Activated CD4-positive, alpha-beta T cell treated with anti-CD3 and anti-CD28 coated beads, Interleukin-2, amount 10 ng/mL, durations not matched to agents 24 days and 14 days (primary cell): ENCODE measurements at regions of chr21 and their contacts with region 1.

Region 1: GRCh38 chr21:17903029-17903806 is 84.1 kb upstream of the C21orf91 start:
- DNase-seq: no peak
- H3K4me3 Mint-ChIP-seq: no peak overlapping the region
- H3K27ac Mint-ChIP-seq: no peak overlapping the region
- H3K4me1 Mint-ChIP-seq: peaks cover 13% of the 10 kb centered on the region
- H3K27me3 Mint-ChIP-seq: peaks cover 3% of the 10 kb centered on the region

Region 2: DNA sequence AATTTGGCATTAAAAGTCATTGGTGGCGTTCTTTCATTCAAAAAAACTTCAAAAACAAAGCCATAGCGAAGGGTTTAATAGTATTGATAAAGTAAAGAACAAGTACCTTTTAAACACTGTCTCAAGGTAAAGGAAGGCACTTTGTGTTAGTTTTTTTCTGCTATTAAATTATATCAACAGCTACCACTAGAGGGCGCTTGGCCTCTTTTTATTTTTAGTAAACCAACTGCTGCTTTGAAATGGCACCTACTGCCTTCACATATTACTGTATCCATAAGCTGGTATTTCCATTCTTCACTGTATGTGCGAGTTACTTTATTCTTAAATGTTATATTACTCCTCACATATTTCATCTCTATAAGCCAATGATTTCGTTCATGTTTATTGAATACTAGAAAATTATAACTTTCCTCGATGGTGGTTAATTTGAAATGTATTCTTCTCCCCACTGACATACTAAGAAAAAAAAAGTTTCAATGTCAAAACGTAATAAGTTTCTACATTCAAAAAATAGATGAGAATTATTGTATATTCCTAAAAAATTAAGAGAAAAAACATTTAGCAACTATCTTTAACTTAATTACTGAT is 516.1 kb before region 1 on chr21:
- intact Hi-C with region 1: loop called (anchors 10 kb)
- DNase-seq: peak; percentile 85
- H3K4me3 Mint-ChIP-seq: no peak overlapping the region
- H3K27ac Mint-ChIP-seq: no peak overlapping the region
- H3K4me1 Mint-ChIP-seq: no peaks in the 10 kb centered on the region
- H3K27me3 Mint-ChIP-seq: peaks cover 3% of the 10 kb centered on the region

Region 3: DNA sequence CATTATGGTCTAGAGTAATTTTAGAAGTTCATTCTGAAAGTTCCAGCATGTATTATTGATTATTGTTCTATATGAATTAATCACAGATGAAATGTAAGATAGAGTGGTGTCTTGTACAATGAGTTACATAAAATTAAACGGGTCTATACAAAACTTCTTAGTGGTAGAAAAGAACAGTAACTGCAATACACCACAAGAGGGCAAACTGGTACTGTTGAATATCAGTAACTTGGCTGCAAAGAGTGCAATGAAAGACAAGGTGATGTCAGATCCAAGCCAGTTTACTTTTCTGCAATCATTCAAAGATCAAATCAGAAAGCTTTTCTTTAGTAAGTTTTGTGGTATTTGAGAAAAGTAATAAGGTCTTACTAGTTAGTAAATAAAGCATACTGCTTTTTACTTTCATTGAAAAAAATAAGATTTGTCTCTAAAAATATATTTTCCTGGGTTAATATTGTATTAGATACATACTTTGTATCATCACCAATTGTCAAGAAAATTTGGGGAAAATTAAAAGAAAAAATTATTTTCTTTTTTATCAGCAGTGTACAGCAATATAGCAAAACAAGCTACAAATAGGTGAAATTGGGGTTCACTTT is 224.1 kb before region 1 on chr21:
- intact Hi-C with region 1: loop called (anchors 1 kb)
- DNase-seq: peak; percentile 78
- H3K4me3 Mint-ChIP-seq: no peak overlapping the region
- H3K27ac Mint-ChIP-seq: no peak overlapping the region
- H3K4me1 Mint-ChIP-seq: no peaks in the 10 kb centered on the region
- H3K27me3 Mint-ChIP-seq: peaks cover 4% of the 10 kb centered on the region

Region 4: GRCh38 chr21:18041012-18041411 is 137.8 kb after region 1 on chr21:
- intact Hi-C with region 1: no loop called
- DNase-seq: no peak
- H3K4me3 Mint-ChIP-seq: no peak overlapping the region
- H3K27ac Mint-ChIP-seq: no peak overlapping the region
- H3K4me1 Mint-ChIP-seq: no peaks in the 10 kb centered on the region
- H3K27me3 Mint-ChIP-seq: no peaks in the 10 kb centered on the region